ENCODE measurements at regions of chr2 and their contacts with region 1.

Region 1: GRCh38 chr2:27191053-27191829 is 20.6 kb upstream of the ATRAID start:
- DNase-seq: peak in 1 of 5 donors; percentile 29
- ATAC-seq: peak in 3 of 4 donors; percentile 65 to 76 (median 73)
- H3K4me3 ChIP-seq: no peak overlapping the region
- H3K27ac ChIP-seq: no peak overlapping the region
- H3K4me1 ChIP-seq: no peaks in the 10 kb centered on the region
- H3K27me3 ChIP-seq: no peaks in the 10 kb centered on the region
- CTCF ChIP-seq: peak; percentile 46 to 70 (median 56)
- POLR2A ChIP-seq: no peak

Region 2: GRCh38 chr2:26964446-26965130 is 226.7 kb before region 1 on chr2:
- intact Hi-C with region 1: loop called in 3 of 10 experiments (anchors 5 to 10 kb)
- DNase-seq: no peak
- ATAC-seq: no peak
- H3K4me3 ChIP-seq: no peak overlapping the region
- H3K27ac ChIP-seq: no peak overlapping the region
- H3K4me1 ChIP-seq: peaks cover 0 to 7% (median 0%) of the 10 kb centered on the region in 12 donors
- H3K27me3 ChIP-seq: peaks cover 0 to 8% (median 0%) of the 10 kb centered on the region in 9 donors
- CTCF ChIP-seq: no peak
- POLR2A ChIP-seq: no peak

Region 3: DNA sequence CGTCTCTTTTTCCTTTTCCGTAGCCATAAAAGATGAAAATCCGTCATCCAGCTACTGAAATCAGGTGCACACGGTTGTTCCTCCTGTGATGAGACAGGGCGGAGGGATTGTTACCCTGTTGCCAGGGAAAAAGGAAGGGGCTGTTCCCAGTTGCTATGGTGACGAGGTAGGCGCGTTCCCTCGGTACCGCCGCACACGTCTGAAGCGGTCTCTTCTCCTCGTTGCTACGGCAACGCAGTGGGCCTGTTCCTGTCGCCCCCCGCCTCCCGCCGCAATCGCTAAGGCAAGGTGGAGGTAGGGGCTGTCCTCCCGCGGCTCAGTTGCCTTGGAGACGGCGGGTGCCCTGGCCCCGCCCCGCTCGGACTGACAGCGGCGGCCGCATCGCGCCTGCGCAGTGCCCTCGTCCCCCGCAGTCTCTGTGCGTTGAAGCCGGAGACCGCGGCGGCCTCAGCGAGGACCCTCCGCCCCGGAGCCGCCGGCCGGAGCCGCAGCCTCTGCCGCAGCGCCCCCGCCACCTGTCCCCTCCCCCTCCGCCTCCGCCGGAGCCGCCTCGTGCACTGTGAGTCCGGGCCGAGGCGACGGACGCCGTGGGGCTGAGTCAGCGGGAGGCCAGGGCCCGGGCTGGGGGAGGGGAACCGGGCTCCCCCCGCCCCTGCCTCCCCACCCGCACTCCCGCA is 220.9 kb before region 1 on chr2 and contains the start of gene MAPRE3:
- intact Hi-C with region 1: loop called in 2 of 10 experiments (anchors 10 kb)
- DNase-seq: peak; percentile 79 to 93 (median 84)
- ATAC-seq: peak; percentile 76 to 97 (median 93)
- H3K4me3 ChIP-seq: peak within 1 kb of the TSS; percentile 64 to 96 (median 84)
- H3K27ac ChIP-seq: peak within 1 kb of the TSS in 11 of 12 donors; percentile 58 to 86 (median 72)
- H3K4me1 ChIP-seq: peaks cover 0 to 33% (median 22%) of the 10 kb centered on the region in 12 donors
- H3K27me3 ChIP-seq: no peaks in the 10 kb centered on the region
- CTCF ChIP-seq: no peak
- POLR2A ChIP-seq: peak in 1 of 2 donors; percentile 34
- total RNA-seq, gene MAPRE3: 27.4 to 55.2 (median 42.3) TPM

Measured in heart left ventricle (tissue), 16 donors.